ENCODE measurements at regions of chr16 and their contacts with region 1.

Region 1: GRCh38 chr16:21656795-21657768 is 4.7 kb upstream of the IGSF6 start:
- DNase-seq: peak; percentile 64 to 79 (median 78)
- H3K4me3 ChIP-seq: peak overlapping the region in 2 of 7 experiments; percentile 30 to 58
- H3K27ac ChIP-seq: peak overlapping the region in 1 of 2 experiments; percentile 58
- H3K4me1 ChIP-seq: peaks cover 7 to 67% (median 14%) of the 10 kb centered on the region in 4 experiments
- H3K27me3 ChIP-seq: no peaks in the 10 kb centered on the region

Region 2: DNA sequence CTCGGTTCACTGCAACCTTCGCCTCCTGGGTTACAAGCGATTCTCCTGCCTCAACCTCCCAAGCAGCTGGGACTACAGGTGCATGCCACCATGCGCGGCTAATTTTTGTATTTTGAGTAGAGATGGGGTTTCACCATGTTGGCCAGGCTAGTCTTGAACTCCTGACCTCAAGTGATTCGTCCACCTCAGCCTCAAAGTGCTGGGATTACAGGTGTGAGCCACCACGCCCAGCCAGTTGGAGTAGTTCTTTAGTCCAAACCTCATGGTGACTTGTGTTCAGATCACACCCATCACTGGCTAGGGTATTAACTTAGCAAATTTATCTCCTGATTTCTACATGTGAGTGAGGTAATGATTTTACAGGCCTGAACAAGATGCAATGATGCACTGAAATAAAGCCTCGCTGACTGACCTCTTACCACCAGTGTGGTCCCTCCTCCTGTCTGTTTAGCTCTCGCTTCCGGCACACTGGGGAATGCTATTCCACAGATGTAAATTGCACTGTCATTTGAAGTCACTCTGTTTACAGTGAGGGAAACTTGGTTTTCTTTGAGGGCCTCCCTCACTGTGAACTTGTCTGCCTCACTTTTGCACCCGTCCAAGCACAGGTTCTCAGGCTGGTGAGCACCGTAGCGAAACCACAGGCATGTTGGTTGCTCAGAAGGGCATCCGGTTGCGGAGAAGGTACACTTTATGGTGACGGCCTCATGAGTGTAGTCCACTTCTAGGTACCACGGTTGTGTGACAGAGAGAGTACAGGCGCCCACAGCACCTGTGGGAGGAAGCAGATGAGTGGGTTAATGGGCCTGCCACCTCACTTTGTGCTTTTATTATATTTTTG is 10.1 kb before region 1 on chr16:
- CTCF ChIA-PET with region 1: interaction called, 25 read pairs
- POLR2A ChIA-PET with region 1: no interaction called
- DNase-seq: peak in 2 of 3 donors; percentile 9 to 29
- H3K4me3 ChIP-seq: no peak overlapping the region
- H3K27ac ChIP-seq: no peak overlapping the region
- H3K4me1 ChIP-seq: peaks cover 13 to 76% (median 24%) of the 10 kb centered on the region in 4 experiments
- H3K27me3 ChIP-seq: no peaks in the 10 kb centered on the region

Region 3: GRCh38 chr16:21708533-21709115 is 51.5 kb after region 1 on chr16:
- CTCF ChIA-PET with region 1: interaction called, 12 read pairs
- POLR2A ChIA-PET with region 1: interaction called, 4 read pairs
- DNase-seq: peak; percentile 68 to 85 (median 79)
- H3K4me3 ChIP-seq: peak overlapping the region in 1 of 7 experiments; percentile 5
- H3K27ac ChIP-seq: no peak overlapping the region
- H3K4me1 ChIP-seq: peaks cover 0 to 3% (median 0%) of the 10 kb centered on the region in 4 experiments
- H3K27me3 ChIP-seq: no peaks in the 10 kb centered on the region